ENCODE measurements at regions of chr21 and their contacts with region 1.

Region 1: DNA sequence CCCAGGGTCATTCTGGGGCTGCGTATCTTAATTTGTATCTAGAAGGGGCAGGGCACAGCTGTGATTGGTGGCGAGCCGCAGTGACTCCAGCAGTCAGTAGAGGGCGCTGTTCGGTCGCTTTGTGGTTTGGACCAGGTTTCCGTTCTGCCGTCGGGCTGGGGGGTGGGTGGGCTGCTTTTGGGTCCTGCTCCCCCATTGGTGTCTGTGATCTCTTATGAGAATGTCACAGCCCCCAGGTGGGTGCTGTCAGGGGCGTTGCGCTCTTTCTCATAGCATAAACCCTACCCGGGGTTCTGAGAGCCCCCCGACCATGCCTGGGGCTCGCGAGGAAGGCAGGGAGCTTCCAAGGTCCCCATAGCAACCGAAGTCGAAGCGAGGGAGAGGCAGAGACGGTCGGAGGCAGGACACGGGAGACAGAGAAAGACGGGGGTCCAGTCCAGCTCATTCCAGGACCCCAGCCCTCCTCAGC is 5.4 kb downstream of the TFF3 start:
- DNase-seq: peak; percentile 85
- ATAC-seq: peak; percentile 83
- H3K4me3 Mint-ChIP-seq: peak overlapping the region; percentile 55
- H3K27ac Mint-ChIP-seq: no peak overlapping the region
- H3K4me1 Mint-ChIP-seq: peaks cover 32% of the 10 kb centered on the region
- H3K27me3 Mint-ChIP-seq: peaks cover 6% of the 10 kb centered on the region
- CTCF ChIP-seq: peak; percentile 90

Region 2: GRCh38 chr21:42145569-42146272 is 164.1 kb before region 1 on chr21:
- CTCF ChIA-PET with region 1: interaction called, 20 read pairs
- POLR2A ChIA-PET with region 1: no interaction called
- DNase-seq: peak; percentile 70
- ATAC-seq: peak; percentile 82
- H3K4me3 Mint-ChIP-seq: no peak overlapping the region
- H3K27ac Mint-ChIP-seq: no peak overlapping the region
- H3K4me1 Mint-ChIP-seq: no peaks in the 10 kb centered on the region
- H3K27me3 Mint-ChIP-seq: no peaks in the 10 kb centered on the region
- CTCF ChIP-seq: peak; percentile 89

Region 3: GRCh38 chr21:42272984-42273600 is 36.7 kb before region 1 on chr21:
- CTCF ChIA-PET with region 1: interaction called, 15 read pairs
- POLR2A ChIA-PET with region 1: no interaction called
- DNase-seq: no peak
- ATAC-seq: no peak
- H3K4me3 Mint-ChIP-seq: no peak overlapping the region
- H3K27ac Mint-ChIP-seq: no peak overlapping the region
- H3K4me1 Mint-ChIP-seq: no peaks in the 10 kb centered on the region
- H3K27me3 Mint-ChIP-seq: no peaks in the 10 kb centered on the region
- CTCF ChIP-seq: no peak

Region 4: DNA sequence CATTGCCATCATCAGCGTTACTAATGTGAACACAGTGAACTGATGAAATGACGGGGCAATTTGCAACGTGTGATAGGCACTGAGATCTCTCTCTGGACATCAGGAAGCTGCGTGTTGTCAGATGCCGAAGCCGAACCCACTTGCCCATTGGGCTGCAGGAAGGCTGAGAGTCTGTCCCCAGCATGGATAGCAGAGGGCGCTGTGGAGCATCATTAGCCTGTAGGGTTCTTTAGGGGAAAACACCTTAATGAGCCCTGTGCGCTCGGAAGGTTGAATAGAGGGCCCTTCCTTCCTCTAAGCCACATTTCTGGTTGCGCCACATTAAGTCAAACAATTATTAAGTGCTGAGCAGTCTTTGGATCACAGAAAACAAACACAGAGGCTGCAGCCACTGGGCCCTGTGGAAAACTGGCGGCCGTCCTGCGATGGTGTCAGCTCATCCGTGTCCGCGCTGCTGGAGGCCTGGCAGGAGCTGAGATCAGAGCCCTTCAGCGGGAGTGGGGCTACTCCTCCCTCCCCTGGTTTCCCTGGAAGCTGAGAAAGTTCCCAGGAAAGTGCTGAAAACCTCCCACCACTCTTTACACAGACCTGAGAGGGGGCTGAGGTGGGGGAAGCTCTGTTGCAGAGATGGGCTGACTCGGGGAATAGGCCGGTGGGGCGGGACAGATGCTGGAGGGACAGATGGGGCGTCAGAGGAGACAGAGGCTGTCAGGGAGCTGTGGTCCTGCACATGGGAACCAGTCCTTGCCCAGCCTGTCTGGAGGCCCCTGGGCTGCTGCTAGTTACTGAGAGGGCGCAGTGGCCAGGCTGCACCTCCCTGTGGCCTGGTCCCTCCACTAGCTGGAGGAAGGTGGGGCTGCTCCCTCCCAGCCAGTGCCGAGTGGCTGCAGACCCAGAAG is 28.3 kb after region 1 on chr21:
- CTCF ChIA-PET with region 1: interaction called, 165 read pairs
- POLR2A ChIA-PET with region 1: no interaction called
- DNase-seq: peak; percentile 90
- ATAC-seq: peak; percentile 81
- H3K4me3 Mint-ChIP-seq: peak overlapping the region; percentile 40; the same call in 1 of the 2 replicates
- H3K27ac Mint-ChIP-seq: peak overlapping the region; percentile 97
- H3K4me1 Mint-ChIP-seq: peaks cover 39% of the 10 kb centered on the region
- H3K27me3 Mint-ChIP-seq: no peaks in the 10 kb centered on the region
- CTCF ChIP-seq: peak; percentile 52

Region 5: GRCh38 chr21:42381334-42381984 is 71.7 kb after region 1 on chr21:
- CTCF ChIA-PET with region 1: interaction called, 35 read pairs
- POLR2A ChIA-PET with region 1: no interaction called
- DNase-seq: peak; percentile 55
- ATAC-seq: peak; percentile 94
- H3K4me3 Mint-ChIP-seq: no peak overlapping the region
- H3K27ac Mint-ChIP-seq: no peak overlapping the region
- H3K4me1 Mint-ChIP-seq: peaks cover 4% of the 10 kb centered on the region
- H3K27me3 Mint-ChIP-seq: peaks cover 3% of the 10 kb centered on the region; the same call in 1 of the 2 replicates
- CTCF ChIP-seq: peak; percentile 48; the same call in 1 of the 2 replicates

Region 6: DNA sequence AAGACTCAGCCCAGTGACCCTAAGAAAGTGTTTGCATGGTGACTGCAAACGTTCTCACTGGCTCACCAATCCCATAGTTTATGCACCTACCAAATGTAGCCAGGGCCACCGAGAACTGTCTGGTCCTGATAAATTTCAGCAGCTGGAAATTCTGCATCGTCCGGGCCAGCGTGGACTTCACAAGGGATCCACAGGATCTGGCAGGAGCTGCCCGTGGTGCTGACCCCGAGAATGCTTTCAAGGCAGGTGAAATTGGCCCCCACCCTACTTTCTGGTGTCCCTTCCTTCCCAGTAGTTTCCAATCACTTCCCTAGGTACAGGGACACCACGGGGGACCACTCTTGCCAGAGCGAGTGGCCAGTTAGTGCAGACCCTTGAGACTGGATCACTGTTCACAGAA is 120.1 kb after region 1 on chr21:
- CTCF ChIA-PET with region 1: interaction called, 12 read pairs
- POLR2A ChIA-PET with region 1: no interaction called
- DNase-seq: peak; percentile 51
- ATAC-seq: no peak; the same call in 1 of the 2 replicates
- H3K4me3 Mint-ChIP-seq: no peak overlapping the region
- H3K27ac Mint-ChIP-seq: no peak overlapping the region
- H3K4me1 Mint-ChIP-seq: no peaks in the 10 kb centered on the region
- H3K27me3 Mint-ChIP-seq: peaks cover 11% of the 10 kb centered on the region; the same call in 1 of the 2 replicates
- CTCF ChIP-seq: no peak

Region 7: GRCh38 chr21:42571391-42572180 is 261.8 kb after region 1 on chr21:
- CTCF ChIA-PET with region 1: no interaction called
- POLR2A ChIA-PET with region 1: no interaction called
- DNase-seq: peak; percentile 10
- ATAC-seq: no peak
- H3K4me3 Mint-ChIP-seq: no peak overlapping the region
- H3K27ac Mint-ChIP-seq: no peak overlapping the region
- H3K4me1 Mint-ChIP-seq: peaks cover 4% of the 10 kb centered on the region
- H3K27me3 Mint-ChIP-seq: no peaks in the 10 kb centered on the region
- CTCF ChIP-seq: no peak

Measured in WTC11 (cell line).